Activated T-helper 1 cell treated with anti-CD3 and anti-CD28 coated beads, Interleukin-12 subunit alpha, Interleukin-12 subunit beta, Interleukin-2, Interleukin-4 antibody, amounts not matched to agents 30 ng/mL and 10 ng/mL and 1 ng/mL, durations not matched to agents 14 hours and 24 hours and 36 hours (primary cell): ENCODE measurements at regions of chr18 and their contacts with region 1.

Region 1: GRCh38 chr18:46013484-46014189 is 46.5 kb upstream of the EPG5 start:
- DNase-seq: no peak
- H3K4me3 Mint-ChIP-seq: no peak overlapping the region
- H3K27ac Mint-ChIP-seq: peak overlapping the region; percentile 3
- H3K4me1 Mint-ChIP-seq: peaks cover 11% of the 10 kb centered on the region
- H3K27me3 Mint-ChIP-seq: peaks cover 9% of the 10 kb centered on the region

Region 2: DNA sequence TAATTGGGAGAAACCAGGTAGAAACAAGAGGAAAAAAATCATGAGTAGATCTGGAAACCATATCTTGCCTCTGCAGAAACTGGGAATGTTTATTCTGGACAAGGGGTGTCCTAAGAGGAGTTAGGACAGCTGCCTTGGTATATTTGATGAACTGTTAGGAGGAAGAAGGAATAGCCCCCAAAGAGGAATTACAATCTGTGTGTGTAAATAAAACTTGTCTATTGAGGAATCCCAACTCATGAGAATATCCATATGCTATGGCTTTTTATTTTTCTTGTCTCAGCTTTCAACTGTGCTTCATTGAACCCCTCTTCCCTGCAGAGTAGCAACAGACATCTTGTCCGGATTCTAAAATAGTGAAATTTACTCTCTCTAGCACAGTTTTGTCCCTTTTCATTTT is 821.8 kb before region 1 on chr18:
- intact Hi-C with region 1: no loop called
- DNase-seq: no peak
- H3K4me3 Mint-ChIP-seq: no peak overlapping the region
- H3K27ac Mint-ChIP-seq: no peak overlapping the region
- H3K4me1 Mint-ChIP-seq: no peaks in the 10 kb centered on the region
- H3K27me3 Mint-ChIP-seq: peaks cover 7% of the 10 kb centered on the region

Region 3: GRCh38 chr18:45212181-45213039 is 801.2 kb before region 1 on chr18:
- intact Hi-C with region 1: no loop called
- DNase-seq: peak; percentile 62
- H3K4me3 Mint-ChIP-seq: no peak overlapping the region
- H3K27ac Mint-ChIP-seq: no peak overlapping the region
- H3K4me1 Mint-ChIP-seq: no peaks in the 10 kb centered on the region
- H3K27me3 Mint-ChIP-seq: peaks cover 7% of the 10 kb centered on the region

Region 4: DNA sequence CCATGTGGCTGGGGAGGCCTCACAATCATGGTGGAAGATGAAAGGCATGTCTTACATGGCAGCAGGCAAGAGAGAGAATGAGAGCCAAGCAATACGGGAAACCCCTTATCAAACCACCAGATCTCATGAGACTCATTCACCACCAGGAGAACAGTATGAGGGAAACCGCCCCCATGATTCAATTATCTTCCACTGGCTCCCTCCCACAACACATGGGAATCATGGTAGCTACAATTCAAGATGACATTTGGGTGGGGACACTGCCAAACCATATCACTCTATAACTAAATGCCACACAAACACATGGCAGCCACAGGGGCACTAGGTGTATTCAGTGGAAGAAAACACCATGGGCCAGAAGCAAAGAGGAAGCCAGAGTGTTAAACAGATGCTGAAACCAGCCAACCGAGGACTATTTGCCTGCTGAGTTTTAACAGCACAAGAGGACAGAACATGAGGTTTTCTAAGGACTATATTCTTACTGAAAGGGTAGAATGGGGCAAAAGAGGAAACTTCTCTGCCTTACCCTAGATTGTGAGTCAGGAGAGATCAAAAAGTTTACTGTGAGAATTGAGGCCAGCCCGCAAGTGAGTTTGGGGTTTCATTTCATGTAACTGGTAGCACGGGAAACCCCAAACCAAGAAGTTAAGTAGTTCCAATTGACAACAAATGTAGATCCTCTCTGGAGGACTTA is 139.0 kb before region 1 on chr18:
- intact Hi-C with region 1: loop called (anchors 1 kb)
- DNase-seq: peak; percentile 67
- H3K4me3 Mint-ChIP-seq: peak overlapping the region; percentile 11
- H3K27ac Mint-ChIP-seq: peak overlapping the region; percentile 90
- H3K4me1 Mint-ChIP-seq: peaks cover 32% of the 10 kb centered on the region
- H3K27me3 Mint-ChIP-seq: peaks cover 2% of the 10 kb centered on the region

Region 5: DNA sequence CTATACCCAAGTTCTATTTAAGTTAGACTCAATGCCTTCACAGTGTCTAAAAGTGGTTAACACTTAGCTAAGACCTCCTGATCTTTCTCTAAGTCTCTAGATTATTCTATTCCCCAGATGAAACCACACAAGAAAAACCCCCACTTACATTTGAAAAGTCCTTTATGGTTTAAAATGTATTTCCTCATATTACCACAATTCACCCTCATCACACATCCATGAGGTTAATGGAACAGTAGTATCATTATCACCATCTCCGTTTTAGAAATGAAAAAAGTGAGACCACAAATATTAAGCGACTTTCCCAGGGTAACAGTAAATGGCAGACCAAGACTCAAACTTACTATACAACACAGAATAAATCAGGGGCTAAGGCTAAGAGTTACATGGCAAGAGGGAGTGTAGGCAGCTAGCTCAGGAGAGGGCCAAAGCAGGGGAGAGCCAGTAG is 75.1 kb before region 1 on chr18:
- intact Hi-C with region 1: loop called (anchors 2 kb)
- DNase-seq: no peak
- H3K4me3 Mint-ChIP-seq: no peak overlapping the region
- H3K27ac Mint-ChIP-seq: peak overlapping the region; percentile 60
- H3K4me1 Mint-ChIP-seq: peaks cover 27% of the 10 kb centered on the region
- H3K27me3 Mint-ChIP-seq: no peaks in the 10 kb centered on the region

Region 6: GRCh38 chr18:45967007-45967706 is 46.5 kb before region 1 on chr18 and contains the start of gene EPG5:
- intact Hi-C with region 1: loop called (anchors 1 kb)
- DNase-seq: peak; percentile 93
- H3K4me3 Mint-ChIP-seq: peak within 1 kb of the TSS; percentile 97
- H3K27ac Mint-ChIP-seq: peak within 1 kb of the TSS; percentile 91
- H3K4me1 Mint-ChIP-seq: peaks cover 38% of the 10 kb centered on the region
- H3K27me3 Mint-ChIP-seq: peaks cover 2% of the 10 kb centered on the region
- total RNA-seq, gene EPG5: 14.3 and 14.6 TPM in 2 replicates

Region 7: GRCh38 chr18:45997700-45998151 is 15.9 kb before region 1 on chr18:
- intact Hi-C with region 1: loop called (anchors 1 kb)
- DNase-seq: peak; percentile 4
- H3K4me3 Mint-ChIP-seq: peak overlapping the region; percentile 66
- H3K27ac Mint-ChIP-seq: peak overlapping the region; percentile 68
- H3K4me1 Mint-ChIP-seq: peaks cover 24% of the 10 kb centered on the region
- H3K27me3 Mint-ChIP-seq: no peaks in the 10 kb centered on the region

Region 8: GRCh38 chr18:46028536-46028891 is 14.9 kb after region 1 on chr18:
- intact Hi-C with region 1: loop called (anchors 1 kb)
- DNase-seq: no peak
- H3K4me3 Mint-ChIP-seq: peak overlapping the region; percentile 86
- H3K27ac Mint-ChIP-seq: peak overlapping the region; percentile 59
- H3K4me1 Mint-ChIP-seq: peaks cover 14% of the 10 kb centered on the region
- H3K27me3 Mint-ChIP-seq: peaks cover 21% of the 10 kb centered on the region